Adrenal gland (tissue), 19 donors: ENCODE measurements at regions of chr20 and their contacts with region 1.

Region 1: DNA sequence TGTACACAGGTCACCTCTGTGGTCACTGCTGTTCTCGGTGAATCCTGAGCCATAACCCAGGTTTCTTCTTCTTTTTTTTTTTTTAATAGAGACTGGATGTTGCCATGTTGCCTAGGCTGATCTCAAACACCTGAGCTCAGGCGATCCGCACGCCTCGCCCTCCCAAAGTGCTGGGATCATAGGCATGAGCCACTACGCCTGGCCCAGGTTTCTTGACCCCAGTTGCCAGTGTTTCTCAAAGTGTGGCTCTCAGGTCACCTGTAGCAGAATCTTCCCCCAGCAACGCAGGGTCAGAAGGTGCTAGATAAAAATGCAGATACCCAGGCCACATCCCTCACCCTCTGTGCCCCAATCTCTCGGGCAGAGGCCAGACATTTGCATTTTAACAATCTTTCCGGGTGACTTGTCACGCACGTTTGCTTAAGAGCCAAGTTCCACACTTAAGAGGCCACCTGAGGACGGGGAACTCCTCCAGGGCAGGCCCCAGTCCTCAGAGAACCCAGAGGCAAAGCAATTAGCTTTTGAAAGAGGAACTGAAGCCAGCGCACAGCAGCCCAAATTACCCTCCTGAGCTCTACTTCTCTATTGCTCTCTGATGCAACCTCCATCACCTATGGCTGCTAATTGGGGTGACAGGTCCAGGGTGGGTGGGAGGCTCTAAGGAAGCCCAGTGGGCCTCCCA is 81.8 kb downstream of the NFATC2 start:
- DNase-seq: no peak
- H3K4me3 ChIP-seq: no peak overlapping the region
- H3K27ac ChIP-seq: no peak overlapping the region
- H3K4me1 ChIP-seq: peaks cover 14 to 26% of the 10 kb centered on the region in 2 donors
- H3K27me3 ChIP-seq: no peaks in the 10 kb centered on the region
- CTCF ChIP-seq: no peak
- POLR2A ChIP-seq: no peak

Region 2: DNA sequence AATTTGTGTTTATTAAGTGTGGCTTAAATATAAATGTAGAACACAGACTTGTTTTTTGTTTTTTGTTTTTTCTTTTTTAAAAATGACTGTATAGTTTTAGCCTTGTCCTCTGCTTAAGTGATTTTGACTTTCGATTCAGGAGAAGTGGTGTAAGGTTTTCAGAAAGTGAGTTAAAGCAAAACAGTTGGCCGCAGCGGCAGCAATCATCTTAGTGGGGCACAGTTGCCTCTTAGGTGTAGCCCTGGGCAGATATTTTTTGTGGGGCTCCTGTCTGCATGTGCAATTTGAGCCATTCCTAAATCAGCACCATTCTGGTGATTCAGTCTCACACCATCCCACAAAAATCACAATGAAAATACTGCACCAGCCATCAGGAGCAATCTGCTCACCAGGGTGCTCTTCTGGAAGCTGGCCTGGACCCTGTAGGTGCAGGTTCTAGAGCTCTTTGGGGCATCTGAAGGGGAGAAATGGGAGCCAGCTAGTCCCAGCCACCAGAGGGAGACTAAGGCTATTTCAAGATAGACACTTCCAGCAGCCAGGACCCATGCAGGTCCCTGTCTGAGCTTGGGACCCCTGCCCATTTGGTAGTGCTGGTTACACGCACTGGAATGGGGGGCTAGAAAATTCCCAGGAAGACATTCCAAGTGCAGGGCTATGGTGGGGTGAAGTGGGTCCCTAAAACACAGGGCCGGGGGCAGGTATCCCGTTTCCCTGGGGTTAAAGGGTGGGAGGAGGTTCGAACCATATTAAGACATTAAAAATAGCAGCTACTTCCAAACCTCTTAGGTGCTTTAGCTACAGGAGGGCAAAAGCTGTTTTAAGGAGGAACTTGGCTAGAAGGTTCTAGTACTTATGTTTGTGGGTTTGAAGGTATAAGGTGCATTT is 74.8 kb before region 1 on chr20:
- intact Hi-C with region 1: loop called in 1 of 2 experiments (anchors 10 kb)
- DNase-seq: peak in 2 of 7 donors; percentile 33 to 67
- H3K4me3 ChIP-seq: no peak overlapping the region
- H3K27ac ChIP-seq: no peak overlapping the region
- H3K4me1 ChIP-seq: no peaks in the 10 kb centered on the region
- H3K27me3 ChIP-seq: no peaks in the 10 kb centered on the region
- CTCF ChIP-seq: peak; percentile 21 to 53 (median 46)
- POLR2A ChIP-seq: no peak

Region 3: GRCh38 chr20:51531141-51531710 is 70.5 kb after region 1 on chr20:
- intact Hi-C with region 1: no loop called
- DNase-seq: no peak
- H3K4me3 ChIP-seq: no peak overlapping the region
- H3K27ac ChIP-seq: peak overlapping the region in 4 of 5 donors; percentile 16 to 84 (median 22)
- H3K4me1 ChIP-seq: no peaks in the 10 kb centered on the region
- H3K27me3 ChIP-seq: no peaks in the 10 kb centered on the region
- CTCF ChIP-seq: no peak
- POLR2A ChIP-seq: no peak